ENCODE measurements at regions of chr17 and their contacts with region 1.

Region 1: GRCh38 chr17:57375770-57376193 is 119.5 kb downstream of the MSI2 start:
- DNase-seq: no peak
- H3K4me3 ChIP-seq: no peak overlapping the region
- H3K27ac ChIP-seq: no peak overlapping the region
- H3K27me3 ChIP-seq: no peaks in the 10 kb centered on the region
- CTCF ChIP-seq: no peak

Region 2: DNA sequence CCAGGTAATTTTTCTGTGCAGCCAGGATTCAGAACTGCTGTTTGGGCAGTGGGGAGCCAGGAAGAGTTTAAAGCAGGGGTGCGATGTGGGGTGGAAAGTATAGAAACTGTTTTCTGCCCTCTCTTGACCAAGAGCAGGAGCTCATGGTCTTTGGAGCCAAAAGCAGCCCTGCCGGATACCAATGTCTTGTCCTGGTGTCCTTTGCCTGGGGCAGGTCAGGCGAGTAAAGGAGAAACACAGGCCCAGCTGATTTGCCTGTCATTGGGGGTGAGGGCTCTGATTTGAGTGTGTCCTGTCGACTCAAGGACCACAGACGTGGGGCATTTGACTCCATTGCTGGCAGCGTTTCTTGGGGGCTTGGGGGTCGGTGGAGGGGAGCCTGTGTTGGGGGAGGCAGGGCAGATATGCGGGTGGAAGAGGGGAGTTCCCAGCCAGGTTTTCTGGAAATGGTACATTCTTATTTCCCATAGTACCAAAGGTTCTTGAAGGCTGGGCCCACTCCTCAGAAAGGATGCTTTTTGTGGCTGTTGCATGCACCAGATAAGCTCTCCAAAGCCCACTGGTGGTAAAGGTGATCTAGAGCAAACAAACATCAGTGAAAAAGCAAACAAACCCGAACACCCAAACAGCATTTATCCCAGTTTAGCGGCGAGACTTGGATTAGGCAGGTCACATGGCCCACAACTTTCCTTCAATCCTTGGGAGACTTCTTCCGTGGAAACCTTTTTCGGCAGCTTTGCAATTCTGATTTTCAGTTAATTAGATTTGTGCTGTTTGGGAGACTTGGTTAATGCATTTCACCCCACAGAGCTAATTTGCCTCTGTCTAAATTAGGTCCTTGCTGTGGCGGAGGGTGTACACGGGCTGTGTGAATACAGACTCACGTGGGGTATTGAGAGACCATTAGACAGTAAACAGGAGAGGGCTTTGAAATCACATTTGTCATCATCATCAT is 60.4 kb before region 1 on chr17:
- CTCF ChIA-PET with region 1: no interaction called
- POLR2A ChIA-PET with region 1: no interaction called
- DNase-seq: no peak
- H3K4me3 ChIP-seq: no peak overlapping the region
- H3K27ac ChIP-seq: no peak overlapping the region
- H3K27me3 ChIP-seq: no peaks in the 10 kb centered on the region
- CTCF ChIP-seq: no peak

Region 3: GRCh38 chr17:57440522-57441485 is 65.0 kb after region 1 on chr17:
- CTCF ChIA-PET with region 1: no interaction called
- POLR2A ChIA-PET with region 1: interaction called, 11 read pairs
- DNase-seq: peak; percentile 46
- H3K4me3 ChIP-seq: no peak overlapping the region
- H3K27ac ChIP-seq: peak overlapping the region; percentile 61
- H3K27me3 ChIP-seq: no peaks in the 10 kb centered on the region
- CTCF ChIP-seq: peak; percentile 36